Ascending aorta (tissue), 2 donors: ENCODE measurements at regions of chr15 and their contacts with region 1.

Region 1: GRCh38 chr15:68252925-68253534 is 23.5 kb upstream of the CLN6 start:
- DNase-seq: peak in 1 of 2 donors; percentile 69
- H3K4me3 ChIP-seq: no peak overlapping the region
- H3K27ac ChIP-seq: no peak overlapping the region
- H3K4me1 ChIP-seq: peaks cover 5 to 11% of the 10 kb centered on the region in 2 donors
- H3K27me3 ChIP-seq: no peaks in the 10 kb centered on the region
- CTCF ChIP-seq: peak; percentile 84 to 89 (median 88)

Region 2: DNA sequence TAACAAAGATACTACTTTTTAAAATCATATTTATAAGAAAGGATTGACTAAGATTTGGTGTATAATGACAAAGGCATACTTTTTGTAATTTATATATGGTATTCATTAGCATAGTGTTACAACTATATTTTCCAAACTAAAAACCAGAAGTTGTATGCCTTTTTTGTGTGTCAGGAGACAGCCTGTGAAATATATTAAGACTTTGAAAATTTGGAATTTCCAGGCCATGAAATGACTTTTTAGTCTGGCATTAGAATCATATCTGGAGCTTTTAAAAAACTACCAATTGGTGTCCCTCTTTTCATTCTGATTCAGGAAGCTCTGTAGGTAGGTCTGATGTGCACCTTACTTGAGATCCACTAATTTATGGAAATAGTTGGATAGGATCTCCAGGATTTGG is 89.8 kb before region 1 on chr15:
- intact Hi-C with region 1: no loop called
- DNase-seq: no peak
- H3K4me3 ChIP-seq: no peak overlapping the region
- H3K27ac ChIP-seq: no peak overlapping the region
- H3K4me1 ChIP-seq: peaks cover 0 to 6% of the 10 kb centered on the region in 2 donors
- H3K27me3 ChIP-seq: no peaks in the 10 kb centered on the region
- CTCF ChIP-seq: no peak

Region 3: DNA sequence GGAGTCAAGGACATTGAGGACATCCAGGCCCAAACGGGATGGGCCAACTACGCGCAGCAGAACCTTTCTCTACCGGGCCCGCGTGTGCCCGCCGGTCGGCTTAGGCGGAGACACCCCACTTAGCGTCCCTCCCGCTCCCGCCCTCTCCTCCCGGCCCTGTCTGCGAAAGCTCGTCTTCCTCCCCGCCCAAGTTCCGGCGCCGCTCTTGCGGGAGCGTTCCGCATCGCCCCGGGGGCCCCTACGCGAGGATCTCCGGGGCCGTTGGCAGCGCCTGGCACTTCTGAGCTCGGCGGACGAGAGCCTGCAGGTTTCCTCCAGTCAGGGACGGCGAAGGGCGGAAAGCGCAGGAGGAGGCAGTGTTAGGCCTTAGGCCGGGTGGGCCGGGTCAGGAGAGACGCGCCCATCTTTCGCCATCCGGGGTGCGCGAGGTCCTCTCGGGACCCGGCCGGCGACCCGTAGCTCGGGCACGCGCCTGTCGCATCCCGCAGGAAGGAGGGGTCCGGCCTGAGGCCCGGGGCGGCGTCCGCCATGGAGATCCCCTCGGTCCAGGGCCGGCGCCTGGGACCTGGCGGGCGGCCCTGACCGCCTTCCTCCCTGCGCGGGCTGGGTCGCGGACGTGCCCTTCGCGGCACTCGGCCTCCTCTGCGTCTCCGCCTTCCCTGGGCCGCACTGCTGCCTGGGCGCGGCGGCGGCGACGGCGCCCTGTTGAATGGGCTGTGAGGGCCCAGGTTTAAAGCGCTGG is 24.7 kb after region 1 on chr15 and contains the start of gene FEM1B:
- intact Hi-C with region 1: loop called (anchors 2 kb)
- DNase-seq: peak; percentile 56 to 94
- H3K4me3 ChIP-seq: peak within 1 kb of the TSS; percentile 74 to 93
- H3K27ac ChIP-seq: peak within 1 kb of the TSS; percentile 99
- H3K4me1 ChIP-seq: peaks cover 3 to 24% of the 10 kb centered on the region in 2 donors
- H3K27me3 ChIP-seq: no peaks in the 10 kb centered on the region
- CTCF ChIP-seq: no peak
- total RNA-seq, gene FEM1B: 57.0 TPM

Region 4: DNA sequence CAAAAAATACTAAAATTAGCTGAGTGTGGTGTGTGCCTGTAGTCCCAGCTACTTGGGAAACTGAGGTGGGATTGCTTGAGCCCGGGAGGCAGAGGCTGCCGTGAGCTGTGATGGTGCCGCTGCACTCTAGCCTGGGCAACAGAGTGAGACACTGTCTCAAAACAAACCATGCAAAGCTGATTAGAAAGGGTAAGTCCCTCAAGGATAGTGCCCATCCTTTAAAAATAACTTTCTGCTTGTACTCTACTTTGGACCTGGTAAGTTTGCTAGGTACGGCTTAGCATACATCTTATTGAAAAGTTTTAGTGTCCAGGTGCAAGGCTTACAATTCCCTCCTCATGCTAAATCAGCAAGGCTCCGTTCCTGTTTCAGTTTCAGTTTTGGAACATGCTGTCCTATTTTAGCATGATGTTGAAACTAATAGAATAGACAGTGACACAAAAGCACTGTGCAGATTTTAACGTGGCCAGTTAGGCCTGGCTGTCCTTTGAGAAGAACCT is 45.9 kb after region 1 on chr15:
- intact Hi-C with region 1: loop called (anchors 5 kb)
- DNase-seq: peak in 1 of 2 donors; percentile 31
- H3K4me3 ChIP-seq: peak overlapping the region; percentile 43 to 50
- H3K27ac ChIP-seq: peak overlapping the region; percentile 35 to 60
- H3K4me1 ChIP-seq: peaks cover 0 to 16% of the 10 kb centered on the region in 2 donors
- H3K27me3 ChIP-seq: no peaks in the 10 kb centered on the region
- CTCF ChIP-seq: no peak

Region 5: DNA sequence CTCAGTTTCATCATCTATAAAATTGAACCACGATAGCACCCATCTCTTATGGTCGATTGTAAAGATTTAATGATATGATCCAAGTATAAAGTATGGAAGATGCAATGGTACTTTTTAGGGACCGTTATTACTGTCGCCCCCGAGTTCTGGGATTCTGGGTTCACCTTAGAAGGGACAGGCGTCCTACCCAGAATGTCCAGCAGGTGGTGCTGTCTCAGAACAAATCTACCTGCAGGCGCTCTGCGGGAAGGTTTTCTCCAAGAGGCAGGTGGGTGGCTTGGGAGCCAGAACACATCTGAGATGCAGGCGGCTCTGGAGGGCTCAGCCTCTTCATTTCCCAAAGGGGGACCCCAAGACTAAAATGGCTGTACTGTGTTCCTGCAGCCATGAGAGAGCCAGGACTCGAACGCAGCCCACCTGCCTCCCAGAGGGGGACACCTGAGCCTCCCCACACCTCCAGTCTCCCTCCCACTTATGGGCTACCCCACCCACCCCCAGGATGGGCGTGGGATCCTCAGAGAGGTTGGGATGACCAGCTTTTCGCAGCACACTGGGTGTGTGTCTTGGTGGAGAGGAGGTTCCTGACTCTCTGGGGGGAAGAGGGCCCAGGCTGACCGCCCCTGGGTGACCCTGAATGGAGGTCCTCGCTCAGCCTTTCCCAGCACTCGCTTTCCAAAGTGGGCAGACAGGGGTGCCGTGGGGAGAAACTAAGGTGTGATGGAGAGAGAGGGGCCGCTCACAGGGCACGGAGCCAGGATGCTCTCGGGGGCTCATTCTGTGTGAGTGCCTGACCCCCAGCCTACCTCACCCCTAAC is 297.7 kb after region 1 on chr15:
- intact Hi-C with region 1: loop called (anchors 5 kb)
- DNase-seq: peak in 1 of 2 donors; percentile 86
- H3K4me3 ChIP-seq: no peak overlapping the region
- H3K27ac ChIP-seq: no peak overlapping the region
- H3K4me1 ChIP-seq: peaks cover 0 to 2% of the 10 kb centered on the region in 2 donors
- H3K27me3 ChIP-seq: no peaks in the 10 kb centered on the region
- CTCF ChIP-seq: peak; percentile 82 to 94 (median 91)

Region 6: GRCh38 chr15:68674975-68675374 is 421.9 kb after region 1 on chr15:
- intact Hi-C with region 1: loop called (anchors 2 kb)
- DNase-seq: no peak
- H3K4me3 ChIP-seq: no peak overlapping the region
- H3K27ac ChIP-seq: no peak overlapping the region
- H3K4me1 ChIP-seq: no peaks in the 10 kb centered on the region
- H3K27me3 ChIP-seq: no peaks in the 10 kb centered on the region
- CTCF ChIP-seq: no peak

Region 7: DNA sequence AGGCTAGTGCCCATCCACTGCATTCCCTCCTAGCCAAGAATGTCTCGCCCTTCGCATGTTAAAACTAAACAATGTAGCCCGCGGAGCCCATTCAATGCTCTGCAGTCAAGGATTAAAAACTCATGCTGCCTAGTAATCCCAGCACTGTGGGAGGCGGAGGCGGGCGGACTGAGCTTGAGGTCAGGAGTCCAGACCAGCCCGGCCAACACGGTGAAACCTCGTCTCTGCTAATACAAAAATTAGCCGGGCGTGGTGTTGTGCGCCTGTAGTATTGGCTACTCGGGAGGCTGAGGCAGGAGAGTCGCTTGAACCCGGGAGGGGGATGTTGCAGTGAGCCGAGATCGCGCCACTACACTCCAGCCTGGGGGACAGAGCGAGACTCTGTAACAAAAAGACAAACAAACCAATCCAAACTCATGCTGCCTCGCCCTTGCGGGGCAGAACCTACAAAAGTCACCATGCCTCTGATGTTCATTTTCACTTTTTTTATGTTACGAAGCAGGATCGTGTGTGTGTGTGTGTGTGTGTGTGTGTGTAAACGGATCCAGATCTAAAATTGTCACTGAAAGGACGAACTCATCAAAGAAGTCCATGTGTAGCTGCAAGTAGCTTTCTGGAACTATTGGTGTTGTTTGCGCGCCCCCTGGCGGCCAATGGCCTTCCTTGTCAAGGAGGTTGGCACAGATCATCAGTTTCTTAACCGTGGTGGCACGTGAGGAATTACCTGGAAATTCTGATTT is 622.5 kb after region 1 on chr15:
- intact Hi-C with region 1: loop called (anchors 2 kb)
- DNase-seq: peak; percentile 55 to 95
- H3K4me3 ChIP-seq: peak overlapping the region; percentile 49 to 60
- H3K27ac ChIP-seq: no peak overlapping the region
- H3K4me1 ChIP-seq: peaks cover 0 to 2% of the 10 kb centered on the region in 2 donors
- H3K27me3 ChIP-seq: no peaks in the 10 kb centered on the region
- CTCF ChIP-seq: peak; percentile 81 to 89 (median 82)